ENCODE measurements at regions of chr11 and their contacts with region 1.

Region 1: DNA sequence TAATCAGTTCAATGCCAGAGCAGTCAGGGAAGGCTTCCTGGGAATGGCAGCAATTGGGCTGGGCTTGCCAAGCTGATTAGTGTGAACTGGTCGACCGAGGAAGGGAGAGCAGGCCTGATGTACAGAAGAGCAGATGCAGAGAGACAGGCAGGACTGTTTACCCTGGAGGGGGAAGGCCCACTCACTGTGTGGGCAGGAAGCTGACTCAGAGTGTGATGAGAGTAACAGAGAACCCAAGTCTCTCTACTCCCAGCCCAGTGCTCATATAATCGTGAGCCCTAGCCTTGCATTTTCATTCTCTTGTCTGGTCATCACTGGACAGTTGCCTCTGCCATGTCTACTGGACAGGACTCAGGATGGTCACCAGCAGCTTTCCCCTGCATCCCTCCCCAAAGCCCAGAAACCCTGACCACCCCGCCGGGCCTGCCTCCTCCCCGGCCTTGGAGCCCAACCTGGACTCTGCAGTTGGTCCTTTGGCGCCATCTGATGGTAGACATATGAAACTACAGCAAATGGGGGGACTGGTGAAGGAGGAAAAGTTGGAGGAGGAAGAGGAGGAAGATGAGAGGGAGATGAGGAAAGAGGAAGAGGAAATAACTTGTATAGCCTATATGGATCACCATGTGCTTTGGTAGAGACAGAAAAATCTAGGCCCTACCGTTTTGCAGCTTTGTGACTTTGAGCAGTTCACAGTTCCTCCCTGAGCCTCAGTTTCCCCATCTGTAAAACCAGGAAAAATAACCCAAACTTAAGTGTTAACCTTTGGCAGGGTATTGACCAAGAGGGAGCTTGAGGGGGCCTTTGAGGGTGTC is 43.4 kb upstream of the PRDM11 start:
- DNase-seq: peak; percentile 58 to 72 (median 59)
- H3K4me3 ChIP-seq: no peak overlapping the region
- H3K27ac ChIP-seq: no peak overlapping the region
- H3K4me1 ChIP-seq: peaks cover 0 to 18% (median 9%) of the 10 kb centered on the region in 4 experiments
- H3K27me3 ChIP-seq: peaks cover 0 to 3% (median 0%) of the 10 kb centered on the region in 5 experiments

Region 2: GRCh38 chr11:44727373-44728287 is 375.4 kb before region 1 on chr11:
- CTCF ChIA-PET with region 1: no interaction called
- POLR2A ChIA-PET with region 1: no interaction called
- DNase-seq: peak; percentile 73 to 80 (median 78)
- H3K4me3 ChIP-seq: peak overlapping the region; percentile 2 to 74 (median 46)
- H3K27ac ChIP-seq: no peak overlapping the region
- H3K4me1 ChIP-seq: peaks cover 0 to 24% (median 21%) of the 10 kb centered on the region in 4 experiments
- H3K27me3 ChIP-seq: peaks cover 0 to 53% (median 34%) of the 10 kb centered on the region in 5 experiments

Region 3: DNA sequence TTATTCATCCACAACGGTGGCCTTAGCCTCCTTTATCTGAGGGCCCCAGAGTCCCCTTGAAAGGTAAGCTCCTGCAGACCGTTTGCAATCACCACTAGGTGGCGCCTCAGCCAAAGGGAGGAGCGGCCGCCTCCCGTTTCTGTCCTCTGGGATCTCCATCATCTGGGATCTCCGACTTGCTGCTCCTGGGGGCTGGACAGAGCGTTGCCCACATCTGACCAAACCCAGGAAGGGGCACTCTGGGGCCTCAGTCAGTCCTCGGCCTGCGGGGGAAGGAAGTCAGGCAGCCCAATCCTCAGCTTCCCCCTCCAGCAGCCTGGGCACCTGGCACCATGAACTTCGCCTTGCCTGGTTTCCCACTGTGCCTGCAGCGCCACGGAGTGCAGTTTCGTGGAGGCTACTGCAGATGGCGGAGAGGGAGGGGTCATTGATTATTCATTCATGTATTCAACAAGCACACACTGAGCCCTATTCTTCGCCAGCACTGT is 175.8 kb before region 1 on chr11:
- CTCF ChIA-PET with region 1: interaction called, 1,197 read pairs
- POLR2A ChIA-PET with region 1: no interaction called
- DNase-seq: peak in 2 of 3 donors; percentile 59 to 60
- H3K4me3 ChIP-seq: no peak overlapping the region
- H3K27ac ChIP-seq: no peak overlapping the region
- H3K4me1 ChIP-seq: peaks cover 0 to 6% (median 3%) of the 10 kb centered on the region in 4 experiments
- H3K27me3 ChIP-seq: peaks cover 0 to 1% (median 0%) of the 10 kb centered on the region in 5 experiments

Region 4: DNA sequence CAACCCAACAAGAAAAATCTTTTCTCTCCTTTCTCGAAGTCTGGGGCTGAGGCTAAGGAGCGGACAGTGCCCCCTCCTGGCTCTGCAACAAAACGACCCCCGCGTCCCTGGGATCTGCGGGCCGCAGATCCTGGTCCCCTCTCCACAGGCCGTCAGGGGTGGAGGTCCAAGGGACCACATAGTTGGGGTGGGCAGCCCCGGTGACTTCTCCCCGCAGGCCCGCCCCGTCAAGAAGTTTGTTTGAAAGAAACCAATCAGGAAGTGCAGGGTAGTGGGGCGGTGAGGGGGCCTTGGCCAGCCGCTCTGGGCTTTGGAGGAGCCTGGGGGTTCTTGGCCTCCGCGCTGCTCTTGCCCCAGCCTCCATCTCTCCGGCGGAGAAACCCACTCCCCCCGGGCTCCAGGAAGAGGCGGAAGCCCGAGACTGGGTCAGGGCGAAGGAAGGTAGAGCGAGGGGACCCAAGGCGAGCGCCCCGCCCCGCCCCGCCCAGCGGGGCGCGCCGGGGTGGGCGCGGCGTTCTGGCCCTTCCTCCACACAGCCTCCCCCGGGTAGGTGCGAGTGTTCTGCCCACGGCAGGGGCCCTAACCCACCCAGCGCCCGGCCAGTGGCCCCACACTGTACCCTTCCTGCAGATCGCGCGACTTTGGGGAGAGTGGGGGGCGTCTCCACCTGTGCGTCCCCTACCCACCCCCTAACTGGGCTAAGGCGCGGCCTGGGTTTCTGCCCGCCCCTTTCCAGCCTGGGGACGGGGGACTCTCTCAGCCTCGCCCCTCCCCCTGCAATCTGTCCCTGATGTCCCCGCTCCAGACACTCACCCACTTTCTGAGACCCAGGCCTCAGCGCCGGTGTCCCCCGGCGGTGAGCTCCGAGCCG is 153.6 kb before region 1 on chr11:
- CTCF ChIA-PET with region 1: interaction called, 1,197 read pairs
- POLR2A ChIA-PET with region 1: interaction called, 3 read pairs
- DNase-seq: peak; percentile 49 to 72 (median 71)
- H3K4me3 ChIP-seq: peak overlapping the region; percentile 51 to 86 (median 75)
- H3K27ac ChIP-seq: no peak overlapping the region
- H3K4me1 ChIP-seq: peaks cover 0 to 30% (median 22%) of the 10 kb centered on the region in 4 experiments
- H3K27me3 ChIP-seq: peaks cover 0 to 4% (median 0%) of the 10 kb centered on the region in 5 experiments

Region 5: DNA sequence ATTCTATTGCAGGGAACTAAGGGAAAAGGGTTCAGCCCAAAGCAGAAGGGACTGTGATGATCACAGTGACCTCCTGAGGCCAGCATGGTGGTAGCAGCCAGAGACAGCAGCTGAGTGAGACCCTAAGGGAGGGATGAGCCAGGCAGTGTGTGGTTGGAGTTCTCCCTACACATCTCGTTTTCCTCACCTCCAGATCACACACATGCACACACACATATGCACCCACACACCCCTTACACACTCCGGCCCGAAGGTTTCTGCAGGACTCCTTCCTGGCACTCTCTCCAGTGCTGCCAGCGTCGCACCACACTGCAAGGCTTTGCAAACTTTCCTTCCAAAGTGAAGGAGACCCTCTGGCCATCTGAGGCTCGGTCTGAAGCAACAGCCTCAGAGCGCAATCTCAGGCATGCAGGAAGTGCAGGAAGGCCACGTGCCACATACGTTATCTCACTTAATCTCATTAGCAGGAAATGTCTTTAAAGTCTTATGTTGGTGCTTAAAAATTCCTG is 125.5 kb before region 1 on chr11:
- CTCF ChIA-PET with region 1: interaction called, 13 read pairs
- POLR2A ChIA-PET with region 1: no interaction called
- DNase-seq: peak; percentile 16 to 68 (median 49)
- H3K4me3 ChIP-seq: peak overlapping the region in 1 of 7 experiments; percentile 19
- H3K27ac ChIP-seq: no peak overlapping the region
- H3K4me1 ChIP-seq: peaks cover 7 to 48% (median 34%) of the 10 kb centered on the region in 4 experiments
- H3K27me3 ChIP-seq: no peaks in the 10 kb centered on the region

Region 6: DNA sequence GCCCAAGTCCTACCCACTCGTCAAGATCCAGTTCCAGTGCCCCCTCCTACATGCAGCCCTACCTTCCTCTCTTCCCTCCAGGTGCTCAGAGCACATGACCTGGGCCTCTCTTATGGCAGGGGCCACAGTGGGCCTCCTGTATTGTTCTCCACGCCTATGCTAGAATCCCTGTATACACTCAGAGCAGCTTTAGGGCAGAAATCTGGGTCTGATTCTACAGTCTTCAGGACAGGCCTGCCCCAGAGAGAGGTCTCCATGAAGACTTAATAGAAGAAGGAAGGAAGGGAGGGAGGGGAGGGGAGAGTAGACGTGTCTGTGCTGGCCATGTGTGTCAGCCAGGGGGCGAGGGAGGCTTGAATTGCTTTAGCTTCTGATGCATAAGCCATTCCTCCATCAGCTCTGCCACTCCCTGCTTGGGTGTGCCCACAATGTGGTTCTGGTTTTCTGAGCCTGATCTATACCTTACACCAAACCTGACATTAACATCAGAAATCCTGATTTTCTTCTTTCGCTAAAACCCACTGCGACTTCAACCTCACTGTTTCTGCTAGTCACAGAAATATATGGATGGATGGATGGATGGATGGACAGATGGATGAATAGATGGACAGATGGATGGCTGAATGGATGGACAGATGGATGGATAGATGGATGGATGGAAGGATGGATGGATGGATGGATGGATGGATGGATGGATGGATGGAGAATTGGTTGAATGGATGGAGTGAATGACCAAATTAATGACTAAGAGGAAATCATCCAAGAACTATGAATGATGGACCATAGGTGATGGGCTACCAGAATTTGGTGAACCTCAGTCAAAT is 13.1 kb before region 1 on chr11:
- CTCF ChIA-PET with region 1: interaction called, 24 read pairs
- POLR2A ChIA-PET with region 1: no interaction called
- DNase-seq: peak; percentile 66 to 79 (median 73)
- H3K4me3 ChIP-seq: no peak overlapping the region
- H3K27ac ChIP-seq: no peak overlapping the region
- H3K4me1 ChIP-seq: peaks cover 3 to 72% (median 51%) of the 10 kb centered on the region in 4 experiments
- H3K27me3 ChIP-seq: no peaks in the 10 kb centered on the region

Region 7: DNA sequence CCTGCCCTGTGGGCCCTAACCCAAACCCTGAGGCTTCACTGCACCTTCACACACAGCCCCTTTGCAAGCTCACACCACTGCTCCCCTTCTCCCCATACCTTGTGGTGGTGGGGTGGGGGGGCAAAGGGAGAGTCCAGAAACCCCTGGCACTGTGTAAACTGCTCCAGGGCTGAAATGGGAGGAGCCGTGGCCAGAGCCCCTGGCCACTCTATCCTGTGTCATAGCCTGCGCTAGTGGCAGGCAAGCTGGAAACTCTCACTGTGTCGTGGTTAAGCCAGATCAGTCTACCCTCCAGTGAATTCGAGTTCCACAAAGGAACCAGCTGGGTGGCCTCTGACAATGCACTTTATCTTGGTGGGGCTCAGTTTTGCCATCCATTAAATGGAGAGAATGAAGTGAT is 191.5 kb after region 1 on chr11:
- CTCF ChIA-PET with region 1: interaction called, 20 read pairs
- POLR2A ChIA-PET with region 1: no interaction called
- DNase-seq: no peak
- H3K4me3 ChIP-seq: no peak overlapping the region
- H3K27ac ChIP-seq: no peak overlapping the region
- H3K4me1 ChIP-seq: peaks cover 0 to 4% (median 0%) of the 10 kb centered on the region in 4 experiments
- H3K27me3 ChIP-seq: peaks cover 0 to 12% (median 9%) of the 10 kb centered on the region in 5 experiments